ENCODE measurements at regions of chr1 and their contacts with region 1.

Region 1: DNA sequence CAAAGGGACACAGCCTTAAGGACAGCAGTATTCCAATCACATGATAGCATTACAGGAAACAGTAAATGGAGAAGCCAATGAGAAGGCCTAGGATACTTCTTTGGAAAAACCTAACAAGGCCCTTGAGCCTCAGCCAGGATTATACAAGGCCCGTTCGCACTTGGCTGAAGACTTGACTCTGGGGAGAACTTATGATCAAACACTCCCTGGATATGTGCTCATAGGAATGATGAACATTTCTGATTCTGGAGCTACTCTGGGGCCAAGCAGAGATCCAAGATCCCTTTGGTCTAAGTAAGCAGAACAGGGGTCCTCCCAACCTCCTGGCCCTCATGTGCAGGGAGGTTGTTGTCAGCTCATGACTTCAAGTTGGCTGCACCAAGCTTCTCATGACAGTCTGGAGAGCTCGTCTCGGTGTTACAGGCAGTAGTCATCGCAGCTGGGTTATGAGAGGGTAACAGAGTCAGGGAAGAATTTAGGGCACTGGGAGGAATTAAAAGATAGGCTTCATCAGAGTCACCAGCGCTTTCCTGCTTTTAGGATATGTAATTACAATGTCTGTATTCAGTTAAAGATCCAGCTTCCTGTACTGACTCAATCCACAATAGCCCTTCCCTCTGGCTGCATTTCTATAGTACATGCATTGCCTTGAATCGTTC is 92.5 kb upstream of the IRF2BP2 start:
- DNase-seq: no peak
- CTCF ChIP-seq: no peak

Region 2: GRCh38 chr1:234716908-234717375 is 14.5 kb after region 1 on chr1:
- CTCF ChIA-PET with region 1: interaction called, 20 read pairs
- POLR2A ChIA-PET with region 1: interaction called, 3 read pairs
- DNase-seq: no peak
- CTCF ChIP-seq: no peak

Region 3: GRCh38 chr1:234722904-234723720 is 20.6 kb after region 1 on chr1:
- CTCF ChIA-PET with region 1: interaction called, 14 read pairs
- POLR2A ChIA-PET with region 1: interaction called, 7 read pairs
- DNase-seq: no peak
- CTCF ChIP-seq: no peak

Region 4: GRCh38 chr1:234957330-234958065 is 255.0 kb after region 1 on chr1:
- CTCF ChIA-PET with region 1: no interaction called
- POLR2A ChIA-PET with region 1: no interaction called
- DNase-seq: no peak
- CTCF ChIP-seq: no peak

Measured in GM10248 (cell line).